Uterus (tissue), 4 donors: ENCODE measurements at regions of chr2 and their contacts with region 1.

Region 1: DNA sequence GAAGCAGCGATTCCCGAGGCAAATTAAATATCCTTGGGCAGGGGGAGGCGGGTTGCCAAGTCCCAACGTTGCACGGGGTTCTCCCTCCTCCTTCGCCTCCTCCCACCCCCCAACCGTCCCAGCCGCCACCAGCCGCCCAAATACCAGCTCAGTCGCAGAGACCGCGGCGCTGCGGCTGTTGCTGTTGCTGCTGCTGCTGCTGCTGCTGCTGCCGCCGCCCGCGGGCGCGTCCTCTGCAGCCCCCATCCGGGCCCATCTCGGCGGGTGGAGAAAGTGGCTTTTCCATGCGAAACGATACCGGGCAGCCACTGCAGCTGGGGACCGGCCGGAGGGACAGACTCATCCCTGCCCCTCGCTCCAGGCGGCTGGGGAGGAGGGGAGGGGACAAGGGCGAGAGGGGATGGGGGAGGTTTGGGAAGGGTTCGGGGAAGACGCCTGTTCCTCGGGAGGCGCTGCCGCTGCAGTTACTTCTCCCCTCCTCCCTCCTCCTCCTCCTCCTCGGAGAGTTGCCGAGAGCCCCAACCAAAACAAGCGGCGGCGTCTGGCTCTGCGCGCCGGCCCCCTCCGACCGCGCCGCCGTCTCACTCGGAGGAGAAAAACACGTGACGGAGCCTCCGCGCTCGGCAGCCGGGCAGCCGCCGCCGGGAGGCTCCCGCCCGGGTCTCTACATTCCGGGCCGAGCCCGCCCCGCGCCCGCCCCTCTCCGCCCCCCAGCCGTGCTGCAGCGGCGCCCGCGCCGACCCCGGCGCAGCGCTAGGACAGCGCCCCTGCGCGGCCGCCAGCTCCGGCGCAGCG is at the start of gene IRS1:
- DNase-seq: peak; percentile 82 to 83
- H3K4me3 ChIP-seq: peak within 1 kb of the TSS; percentile 67 to 69
- H3K27ac ChIP-seq: peak within 1 kb of the TSS; percentile 93 to 96
- H3K4me1 ChIP-seq: no peaks in the 10 kb centered on the region
- H3K27me3 ChIP-seq: no peaks in the 10 kb centered on the region
- CTCF ChIP-seq: peak; percentile 3 to 78 (median 58)
- POLR2A ChIP-seq: peak in 1 of 2 donors; percentile 60
- total RNA-seq, gene IRS1: 11.5 to 54.2 (median 29.5) TPM

Region 2: GRCh38 chr2:225660262-225661131 is 1138.9 kb before region 1 on chr2:
- intact Hi-C with region 1: loop called (anchors 10 kb)
- DNase-seq: peak; percentile 57 to 60
- H3K4me3 ChIP-seq: no peak overlapping the region
- H3K27ac ChIP-seq: no peak overlapping the region
- H3K4me1 ChIP-seq: no peaks in the 10 kb centered on the region
- H3K27me3 ChIP-seq: no peaks in the 10 kb centered on the region
- CTCF ChIP-seq: peak; percentile 53 to 78 (median 73)
- POLR2A ChIP-seq: no peak

Region 3: DNA sequence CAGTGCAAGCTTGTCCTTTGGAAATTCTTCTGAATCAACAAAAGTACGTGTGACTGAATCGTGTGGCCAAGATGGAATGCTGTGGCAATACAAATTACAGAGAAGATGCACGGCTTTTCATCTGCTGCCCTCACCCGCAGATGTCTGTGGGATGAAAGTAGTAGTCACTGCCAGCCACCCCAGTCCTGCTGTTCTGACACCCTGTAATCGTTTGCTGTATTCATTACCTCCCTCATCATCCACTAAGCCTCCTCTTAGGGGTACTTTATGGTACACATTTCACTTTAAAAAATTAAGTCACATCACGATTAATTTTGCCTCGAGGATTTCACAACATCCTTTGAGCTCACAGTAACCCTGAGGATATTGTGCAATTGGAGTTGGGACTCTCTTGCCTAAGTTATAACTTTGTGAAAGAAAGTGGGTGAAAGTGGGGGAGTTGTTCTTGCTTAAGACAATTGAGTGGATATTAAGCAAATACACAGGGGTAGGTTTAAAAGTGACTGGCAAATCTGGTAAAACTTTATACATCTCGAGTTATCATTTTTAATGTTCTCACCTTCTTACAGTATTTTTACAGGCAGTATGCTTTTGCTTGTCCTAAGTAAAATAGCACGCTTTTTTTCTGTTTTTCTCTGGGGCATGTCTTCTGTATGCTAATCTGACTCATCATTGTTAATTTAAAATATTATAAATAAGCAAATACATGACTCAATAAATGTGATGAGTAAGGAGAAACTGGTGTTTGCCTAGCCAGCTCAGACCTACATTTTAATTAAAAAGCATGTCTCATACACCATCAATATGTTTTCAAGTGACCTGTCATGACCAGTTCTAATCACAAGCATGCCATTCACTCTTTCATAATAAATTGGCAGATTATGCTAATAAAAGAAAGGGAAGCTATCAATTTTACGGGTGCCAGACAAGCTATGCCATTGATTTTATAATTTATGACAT is 680.6 kb before region 1 on chr2:
- intact Hi-C with region 1: loop called (anchors 5 kb)
- DNase-seq: peak; percentile 32 to 52
- H3K4me3 ChIP-seq: peak overlapping the region in 1 of 2 donors; percentile 20
- H3K27ac ChIP-seq: peak overlapping the region; percentile 59 to 78
- H3K4me1 ChIP-seq: no peaks in the 10 kb centered on the region
- H3K27me3 ChIP-seq: no peaks in the 10 kb centered on the region
- CTCF ChIP-seq: no peak
- POLR2A ChIP-seq: no peak

Region 4: GRCh38 chr2:227545990-227546389 is 746.6 kb after region 1 on chr2:
- intact Hi-C with region 1: no loop called
- DNase-seq: no peak
- H3K4me3 ChIP-seq: no peak overlapping the region
- H3K27ac ChIP-seq: no peak overlapping the region
- H3K4me1 ChIP-seq: no peaks in the 10 kb centered on the region
- H3K27me3 ChIP-seq: no peaks in the 10 kb centered on the region
- CTCF ChIP-seq: no peak
- POLR2A ChIP-seq: no peak